MCF 10A (cell line): ENCODE measurements at regions of chr6 and their contacts with region 1.

Region 1: DNA sequence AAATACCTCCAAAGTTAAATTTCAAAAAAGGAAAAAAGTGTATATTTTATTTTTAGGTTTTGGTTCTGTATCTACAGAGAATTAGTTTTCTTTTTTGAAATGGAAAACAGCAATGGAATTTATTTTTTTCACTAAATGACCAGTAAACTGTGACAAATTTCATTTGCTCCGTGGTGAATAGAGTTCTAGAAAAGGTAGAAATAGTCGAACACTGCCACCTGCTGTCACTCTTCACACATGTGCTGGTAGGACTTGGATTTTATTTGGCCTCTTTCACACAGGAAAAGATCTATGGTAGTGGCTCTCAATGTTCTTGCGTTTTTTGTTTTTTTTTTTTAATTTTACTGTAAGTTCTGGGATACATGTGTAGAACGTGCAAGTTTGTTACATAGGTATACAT is 312.5 kb downstream of the EYA4 start:
- DNase-seq: peak; percentile 70
- H3K4me3 Mint-ChIP-seq: no peak overlapping the region
- H3K27ac Mint-ChIP-seq: no peak overlapping the region
- H3K4me1 Mint-ChIP-seq: peaks cover 12% of the 10 kb centered on the region
- H3K27me3 Mint-ChIP-seq: no peaks in the 10 kb centered on the region
- CTCF ChIP-seq: peak; percentile 61

Region 2: GRCh38 chr6:132830334-132830751 is 723.3 kb before region 1 on chr6:
- CTCF ChIA-PET with region 1: interaction called, 28 read pairs
- POLR2A ChIA-PET with region 1: interaction called, 3 read pairs
- intact Hi-C with region 1: loop called (anchors 2 kb)
- DNase-seq: peak; percentile 45
- H3K4me3 Mint-ChIP-seq: no peak overlapping the region
- H3K27ac Mint-ChIP-seq: no peak overlapping the region
- H3K4me1 Mint-ChIP-seq: no peaks in the 10 kb centered on the region
- H3K27me3 Mint-ChIP-seq: peaks cover 19% of the 10 kb centered on the region
- CTCF ChIP-seq: peak; percentile 41

Region 3: DNA sequence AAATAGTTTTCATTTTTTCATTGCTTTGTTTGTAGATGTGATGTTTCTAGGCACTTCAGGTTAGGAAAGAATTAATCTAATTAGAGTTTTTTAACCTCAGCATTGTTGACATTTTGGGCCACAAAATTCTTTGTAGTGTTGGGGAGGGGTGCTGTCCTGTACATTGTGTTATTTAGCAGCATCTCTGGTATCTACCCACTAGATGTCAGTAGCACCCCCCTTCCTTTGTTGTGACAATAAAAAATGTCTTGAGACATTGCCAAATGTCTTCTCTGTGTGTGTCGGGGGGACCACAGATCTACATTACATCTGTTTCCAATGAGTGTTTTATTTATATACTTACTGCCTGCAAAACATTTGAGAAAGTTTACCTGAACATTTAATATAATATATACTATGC is 266.9 kb before region 1 on chr6:
- CTCF ChIA-PET with region 1: no interaction called
- POLR2A ChIA-PET with region 1: no interaction called
- intact Hi-C with region 1: loop called (anchors 5 kb)
- DNase-seq: peak; percentile 30
- H3K4me3 Mint-ChIP-seq: no peak overlapping the region
- H3K27ac Mint-ChIP-seq: no peak overlapping the region
- H3K4me1 Mint-ChIP-seq: no peaks in the 10 kb centered on the region
- H3K27me3 Mint-ChIP-seq: peaks cover 70% of the 10 kb centered on the region
- CTCF ChIP-seq: peak; percentile 17